ENCODE measurements at regions of chr19 and their contacts with region 1.

Region 1: GRCh38 chr19:41263850-41264580 is at the start of gene HNRNPUL1:
- DNase-seq: peak; percentile 100
- H3K4me3 ChIP-seq: peak within 1 kb of the TSS; percentile 78 to 94
- H3K4me3 Mint-ChIP-seq: peak within 1 kb of the TSS; percentile 92 to 98 (median 97)
- H3K27ac ChIP-seq: peak within 1 kb of the TSS; percentile 99
- H3K27ac Mint-ChIP-seq: peak within 1 kb of the TSS; percentile 99 to 100 (median 100)
- H3K4me1 ChIP-seq: peaks cover 42% of the 10 kb centered on the region
- H3K4me1 Mint-ChIP-seq: peaks cover 29 to 60% (median 37%) of the 10 kb centered on the region in 4 donors
- H3K27me3 ChIP-seq: no peaks in the 10 kb centered on the region
- H3K27me3 Mint-ChIP-seq: peaks cover 0 to 4% of the 10 kb centered on the region in 2 donors
- total RNA-seq, gene HNRNPUL1: 300 TPM

Region 2: GRCh38 chr19:40750059-40750873 is 513.7 kb before region 1 on chr19 and contains the start of gene ACTMAP:
- CTCF ChIA-PET with region 1: interaction called, 3 read pairs
- POLR2A ChIA-PET with region 1: interaction called, 10 read pairs
- intact Hi-C with region 1: no loop called
- DNase-seq: peak; percentile 100
- H3K4me3 ChIP-seq: peak within 1 kb of the TSS; percentile 81 to 98
- H3K4me3 Mint-ChIP-seq: peak within 1 kb of the TSS; percentile 95 to 100 (median 98)
- H3K27ac ChIP-seq: peak within 1 kb of the TSS; percentile 86
- H3K27ac Mint-ChIP-seq: peak within 1 kb of the TSS; percentile 89 to 99 (median 99)
- H3K4me1 ChIP-seq: peaks cover 42% of the 10 kb centered on the region
- H3K4me1 Mint-ChIP-seq: peaks cover 22 to 50% (median 31%) of the 10 kb centered on the region in 4 donors
- H3K27me3 ChIP-seq: no peaks in the 10 kb centered on the region
- H3K27me3 Mint-ChIP-seq: no peaks in the 10 kb centered on the region
- total RNA-seq, gene ACTMAP: 5.2 to 5.5 TPM

Region 3: GRCh38 chr19:40974633-40975037 is 289.4 kb before region 1 on chr19:
- CTCF ChIA-PET with region 1: no interaction called
- POLR2A ChIA-PET with region 1: interaction called, 17 read pairs
- intact Hi-C with region 1: loop called (anchors 2 kb)
- DNase-seq: peak; percentile 72 to 79 (median 73)
- H3K4me3 ChIP-seq: no peak overlapping the region
- H3K4me3 Mint-ChIP-seq: no peak overlapping the region
- H3K27ac ChIP-seq: no peak overlapping the region
- H3K27ac Mint-ChIP-seq: peak overlapping the region in 1 of 7 donors; percentile 9
- H3K4me1 ChIP-seq: peaks cover 22% of the 10 kb centered on the region
- H3K4me1 Mint-ChIP-seq: peaks cover 22 to 31% (median 26%) of the 10 kb centered on the region in 4 donors
- H3K27me3 ChIP-seq: no peaks in the 10 kb centered on the region
- H3K27me3 Mint-ChIP-seq: peaks cover 5 to 7% of the 10 kb centered on the region in 2 donors

Region 4: DNA sequence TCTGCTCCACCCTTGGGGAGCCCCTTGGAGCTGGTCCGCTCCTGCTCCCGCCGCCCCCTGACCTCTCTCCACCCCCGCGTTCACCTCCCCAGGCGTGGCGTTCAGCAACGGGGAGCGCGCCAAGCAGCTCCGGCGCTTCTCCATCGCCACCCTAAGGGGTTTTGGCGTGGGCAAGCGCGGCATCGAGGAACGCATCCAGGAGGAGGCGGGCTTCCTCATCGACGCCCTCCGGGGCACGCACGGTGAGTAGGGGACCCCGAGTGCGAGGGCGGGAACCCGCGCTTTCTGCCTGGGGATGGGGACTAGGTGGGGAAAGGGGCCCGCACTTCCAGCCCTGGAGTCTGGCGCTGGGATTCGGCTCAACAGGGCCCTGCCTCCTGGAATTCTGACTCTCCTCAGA is 174.1 kb before region 1 on chr19:
- CTCF ChIA-PET with region 1: no interaction called
- POLR2A ChIA-PET with region 1: no interaction called
- intact Hi-C with region 1: no loop called
- DNase-seq: peak in 2 of 5 donors; percentile 1 to 15
- H3K4me3 ChIP-seq: no peak overlapping the region
- H3K4me3 Mint-ChIP-seq: peak overlapping the region in 3 of 8 donors; percentile 48 to 67 (median 61)
- H3K27ac ChIP-seq: no peak overlapping the region
- H3K27ac Mint-ChIP-seq: peak overlapping the region in 1 of 7 donors; percentile 48
- H3K4me1 ChIP-seq: no peaks in the 10 kb centered on the region
- H3K4me1 Mint-ChIP-seq: peaks cover 0 to 10% (median 5%) of the 10 kb centered on the region in 4 donors
- H3K27me3 ChIP-seq: peaks cover 6% of the 10 kb centered on the region
- H3K27me3 Mint-ChIP-seq: peaks cover 56 to 69% of the 10 kb centered on the region in 2 donors

Region 5: GRCh38 chr19:41226053-41226873 is 37.8 kb before region 1 on chr19:
- CTCF ChIA-PET with region 1: interaction called, 5 read pairs
- POLR2A ChIA-PET with region 1: interaction called, 41 read pairs
- intact Hi-C with region 1: loop called (anchors 1 kb)
- DNase-seq: peak; percentile 29 to 62 (median 38)
- H3K4me3 ChIP-seq: peak overlapping the region; percentile 49 to 53
- H3K4me3 Mint-ChIP-seq: peak overlapping the region; percentile 84 to 94 (median 92)
- H3K27ac ChIP-seq: no peak overlapping the region
- H3K27ac Mint-ChIP-seq: peak overlapping the region; percentile 8 to 93 (median 76)
- H3K4me1 ChIP-seq: peaks cover 14% of the 10 kb centered on the region
- H3K4me1 Mint-ChIP-seq: peaks cover 11 to 20% (median 13%) of the 10 kb centered on the region in 4 donors
- H3K27me3 ChIP-seq: no peaks in the 10 kb centered on the region
- H3K27me3 Mint-ChIP-seq: peaks cover 10 to 13% of the 10 kb centered on the region in 2 donors

Region 6: DNA sequence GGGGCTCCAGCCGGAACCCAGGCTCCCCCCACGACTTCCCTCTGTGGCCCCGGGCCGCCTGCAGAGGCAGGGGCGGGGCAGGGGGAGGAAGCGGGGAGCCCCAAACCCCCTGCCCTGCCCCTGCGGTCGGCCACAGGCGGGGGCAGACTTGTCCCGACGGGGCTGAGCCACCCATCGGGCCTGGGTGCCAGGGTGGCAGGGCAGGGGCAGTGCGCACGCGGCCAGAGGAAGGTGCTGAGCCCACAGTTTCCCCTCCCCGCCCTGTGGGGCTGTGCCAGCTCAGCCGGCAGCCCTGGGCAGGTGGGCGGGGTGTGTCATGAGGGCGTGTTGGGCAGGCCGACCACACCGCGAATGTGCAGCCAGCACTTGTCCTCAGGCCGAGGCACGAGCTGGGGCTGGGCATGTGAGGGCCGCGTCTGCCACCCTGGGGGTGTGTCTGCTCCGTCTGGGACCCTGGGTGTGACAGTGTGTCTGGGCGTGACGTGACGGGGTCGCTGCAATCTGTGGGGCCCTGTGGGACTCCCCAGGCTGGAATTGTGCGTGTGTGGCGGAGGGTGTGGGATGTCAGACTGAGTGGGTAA is 63.7 kb after region 1 on chr19:
- CTCF ChIA-PET with region 1: interaction called, 4 read pairs
- POLR2A ChIA-PET with region 1: interaction called, 48 read pairs
- intact Hi-C with region 1: no loop called
- DNase-seq: peak; percentile 81 to 99 (median 84)
- H3K4me3 ChIP-seq: peak overlapping the region in 1 of 2 donors; percentile 43
- H3K4me3 Mint-ChIP-seq: peak overlapping the region; percentile 77 to 87 (median 84)
- H3K27ac ChIP-seq: peak overlapping the region; percentile 76
- H3K27ac Mint-ChIP-seq: peak overlapping the region; percentile 97 to 99 (median 98)
- H3K4me1 ChIP-seq: peaks cover 69% of the 10 kb centered on the region
- H3K4me1 Mint-ChIP-seq: peaks cover 45 to 81% (median 62%) of the 10 kb centered on the region in 4 donors
- H3K27me3 ChIP-seq: no peaks in the 10 kb centered on the region
- H3K27me3 Mint-ChIP-seq: no peaks in the 10 kb centered on the region

Region 7: DNA sequence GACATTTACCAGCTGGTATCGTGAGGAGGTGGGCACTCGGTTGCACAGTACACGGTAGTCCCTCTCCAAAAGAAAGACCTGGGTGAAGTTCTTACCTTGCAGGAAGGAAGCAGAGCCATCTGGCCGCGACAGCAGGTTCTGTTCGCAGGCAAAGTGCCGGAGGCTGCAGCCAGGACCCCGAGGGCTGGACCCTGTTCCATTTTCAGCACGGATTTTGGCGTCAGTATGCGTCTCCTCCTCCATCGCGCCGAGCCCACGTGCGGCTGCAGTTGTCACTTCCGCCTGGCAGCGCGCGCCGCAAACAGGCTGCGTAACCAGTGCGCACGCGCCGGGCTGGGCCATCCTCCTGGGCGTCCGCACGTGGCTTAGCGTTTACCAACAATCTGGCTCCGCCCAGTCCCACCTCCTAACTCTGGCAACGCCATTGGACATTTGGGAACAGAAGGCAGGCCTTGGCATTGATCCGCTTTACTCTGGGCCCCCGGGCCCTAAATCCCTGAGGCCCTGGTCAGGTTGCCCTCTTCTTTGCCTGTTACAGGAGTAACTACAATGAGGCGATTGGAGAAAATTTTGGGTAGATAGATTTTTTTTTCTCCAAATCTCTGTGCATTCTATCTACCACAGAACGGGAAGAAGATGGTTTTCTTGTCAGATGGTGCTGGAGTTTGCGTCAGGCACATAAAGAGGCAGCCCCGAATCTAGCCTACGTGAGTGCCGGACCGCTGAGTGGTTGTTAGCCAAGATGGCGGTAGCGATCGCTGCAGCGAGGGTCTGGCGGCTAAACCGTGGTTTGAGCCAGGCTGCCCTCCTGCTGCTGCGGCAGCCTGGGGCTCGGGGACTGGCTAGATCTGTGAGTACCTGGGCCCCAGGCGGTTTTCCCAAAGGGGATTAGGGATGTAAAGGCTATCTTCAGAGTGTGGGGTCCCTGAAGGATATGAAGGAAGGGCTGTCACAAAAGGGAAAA is 133.4 kb after region 1 on chr19 and contains the starts of genes BCKDHA and EXOSC5:
- CTCF ChIA-PET with region 1: no interaction called
- POLR2A ChIA-PET with region 1: interaction called, 5 read pairs
- intact Hi-C with region 1: loop called (anchors 1 kb)
- DNase-seq: peak; percentile 98 to 100 (median 100)
- H3K4me3 ChIP-seq: peak within 1 kb of the TSS; percentile 94 to 96
- H3K4me3 Mint-ChIP-seq: peak within 1 kb of the TSS; percentile 94 to 100 (median 98)
- H3K27ac ChIP-seq: peak within 1 kb of the TSS; percentile 93
- H3K27ac Mint-ChIP-seq: peak within 1 kb of the TSS; percentile 98 to 100 (median 100)
- H3K4me1 ChIP-seq: peaks cover 31% of the 10 kb centered on the region
- H3K4me1 Mint-ChIP-seq: peaks cover 27 to 54% (median 41%) of the 10 kb centered on the region in 4 donors
- H3K27me3 ChIP-seq: no peaks in the 10 kb centered on the region
- H3K27me3 Mint-ChIP-seq: no peaks in the 10 kb centered on the region
- total RNA-seq, gene BCKDHA: 23.6 to 27.1 TPM
- total RNA-seq, gene EXOSC5: 18.2 to 23.0 TPM

Region 8: DNA sequence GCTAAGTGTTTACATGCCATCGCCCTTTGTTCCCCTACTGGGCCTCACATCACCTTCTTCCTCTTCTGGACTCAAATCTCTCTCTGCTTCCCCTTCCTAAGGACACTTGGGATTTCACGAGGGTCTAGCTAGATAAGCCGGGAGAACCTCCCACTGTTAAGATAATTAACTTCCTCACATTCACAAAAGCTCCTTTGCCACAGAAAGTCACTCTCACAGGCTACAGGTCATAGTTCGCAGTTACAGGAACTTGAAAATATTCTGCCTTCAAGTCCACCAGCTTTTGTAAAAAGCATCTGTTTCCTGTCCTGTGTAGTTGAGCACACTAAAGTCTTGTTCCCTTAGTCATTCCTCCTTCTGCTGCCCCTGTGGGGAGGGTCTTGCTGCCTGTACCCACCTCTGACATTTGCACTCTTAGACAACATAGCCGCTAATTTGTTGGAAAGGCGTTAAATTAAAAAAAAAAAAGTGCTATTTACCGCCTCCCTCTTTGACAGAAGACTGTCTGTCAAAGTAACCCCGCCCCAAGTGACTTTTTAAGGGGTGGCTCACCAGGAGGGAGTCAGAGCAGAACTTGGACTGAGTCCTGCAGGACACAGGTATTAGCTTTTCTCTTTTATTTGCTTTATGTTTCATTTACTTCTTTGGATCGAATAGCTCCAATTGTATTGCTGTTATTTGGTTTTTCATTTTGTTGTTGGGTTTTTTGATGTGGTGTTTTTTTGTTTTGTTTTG is 285.1 kb after region 1 on chr19:
- CTCF ChIA-PET with region 1: no interaction called
- POLR2A ChIA-PET with region 1: interaction called, 21 read pairs
- intact Hi-C with region 1: loop called (anchors 5 kb)
- DNase-seq: peak; percentile 72 to 82 (median 75)
- H3K4me3 ChIP-seq: peak overlapping the region; percentile 75 to 91
- H3K4me3 Mint-ChIP-seq: peak overlapping the region; percentile 98 to 100 (median 99)
- H3K27ac ChIP-seq: peak overlapping the region; percentile 63
- H3K27ac Mint-ChIP-seq: peak overlapping the region; percentile 89 to 98 (median 97)
- H3K4me1 ChIP-seq: peaks cover 63% of the 10 kb centered on the region
- H3K4me1 Mint-ChIP-seq: peaks cover 50 to 82% (median 61%) of the 10 kb centered on the region in 4 donors
- H3K27me3 ChIP-seq: no peaks in the 10 kb centered on the region
- H3K27me3 Mint-ChIP-seq: no peaks in the 10 kb centered on the region

Region 9: GRCh38 chr19:41575998-41576397 is 312.0 kb after region 1 on chr19 and contains the start of gene CEACAM21:
- CTCF ChIA-PET with region 1: no interaction called
- POLR2A ChIA-PET with region 1: no interaction called
- intact Hi-C with region 1: no loop called
- DNase-seq: peak in 1 of 5 donors; percentile 59
- H3K4me3 ChIP-seq: peak within 1 kb of the TSS in 1 of 2 donors; percentile 35
- H3K4me3 Mint-ChIP-seq: peak within 1 kb of the TSS; percentile 54 to 83 (median 68)
- H3K27ac ChIP-seq: peak within 1 kb of the TSS; percentile 8
- H3K27ac Mint-ChIP-seq: peak within 1 kb of the TSS; percentile 73 to 91 (median 84)
- H3K4me1 ChIP-seq: peaks cover 22% of the 10 kb centered on the region
- H3K4me1 Mint-ChIP-seq: peaks cover 21 to 36% (median 28%) of the 10 kb centered on the region in 4 donors
- H3K27me3 ChIP-seq: no peaks in the 10 kb centered on the region
- H3K27me3 Mint-ChIP-seq: no peaks in the 10 kb centered on the region
- total RNA-seq, gene CEACAM21: 42.8 to 48.7 TPM